ENCODE measurements at regions of chr13 and their contacts with region 1.

Region 1: DNA sequence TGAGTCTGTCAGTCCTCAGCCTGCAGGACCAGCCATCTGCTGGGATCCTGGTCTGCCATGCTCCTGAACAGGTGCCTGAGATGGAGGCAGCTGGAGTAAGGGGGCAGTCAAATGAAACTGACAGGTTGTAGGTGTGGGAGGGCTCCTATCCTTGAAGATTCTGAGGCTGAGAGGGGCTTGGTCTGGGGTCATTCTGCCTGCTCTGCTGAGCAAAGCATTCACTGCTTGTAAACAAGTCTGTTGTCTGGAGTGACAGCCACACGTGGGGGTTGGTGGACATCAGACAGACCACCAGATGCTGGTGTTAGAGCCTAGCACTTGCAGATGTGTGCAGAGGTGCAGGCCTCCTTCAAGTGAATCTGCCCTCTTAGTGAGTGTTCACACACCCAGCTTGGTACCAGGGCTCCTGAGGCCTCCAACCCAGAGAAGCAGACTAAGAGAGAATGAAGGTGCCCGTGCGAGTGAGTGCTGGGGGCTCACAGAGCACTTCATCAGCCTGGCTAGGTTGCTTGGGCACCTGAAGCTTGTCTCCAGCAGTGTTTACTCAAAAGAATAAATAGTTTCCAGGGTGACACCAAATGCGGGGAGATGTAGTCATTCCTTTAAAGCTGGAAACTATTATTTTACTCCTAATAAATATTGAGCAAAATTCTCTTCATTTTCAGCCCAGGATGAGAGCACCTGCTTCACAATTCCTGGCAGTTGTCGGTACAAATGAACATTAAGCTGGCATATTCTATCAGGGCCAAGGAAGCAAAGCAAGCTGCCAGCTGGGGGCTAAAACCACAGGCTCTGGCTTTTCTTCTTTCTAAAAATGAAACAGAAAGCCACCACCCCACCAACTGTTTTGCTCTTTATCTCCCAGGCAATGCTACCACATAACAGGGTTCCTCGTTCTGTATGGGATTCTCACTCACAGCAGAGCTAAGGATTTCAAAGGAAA is 82.3 kb downstream of the RNASEH2B start:
- DNase-seq: no peak
- H3K4me3 ChIP-seq: no peak overlapping the region
- H3K27ac ChIP-seq: no peak overlapping the region
- H3K4me1 ChIP-seq: no peaks in the 10 kb centered on the region
- H3K27me3 ChIP-seq: no peaks in the 10 kb centered on the region
- CTCF ChIP-seq: no peak
- POLR2A ChIP-seq: no peak

Region 2: GRCh38 chr13:51058461-51059167 is 66.8 kb after region 1 on chr13:
- intact Hi-C with region 1: loop called (anchors 5 kb)
- DNase-seq: no peak
- H3K4me3 ChIP-seq: no peak overlapping the region
- H3K27ac ChIP-seq: no peak overlapping the region
- H3K4me1 ChIP-seq: no peaks in the 10 kb centered on the region
- H3K27me3 ChIP-seq: no peaks in the 10 kb centered on the region
- CTCF ChIP-seq: no peak
- POLR2A ChIP-seq: no peak

Region 3: DNA sequence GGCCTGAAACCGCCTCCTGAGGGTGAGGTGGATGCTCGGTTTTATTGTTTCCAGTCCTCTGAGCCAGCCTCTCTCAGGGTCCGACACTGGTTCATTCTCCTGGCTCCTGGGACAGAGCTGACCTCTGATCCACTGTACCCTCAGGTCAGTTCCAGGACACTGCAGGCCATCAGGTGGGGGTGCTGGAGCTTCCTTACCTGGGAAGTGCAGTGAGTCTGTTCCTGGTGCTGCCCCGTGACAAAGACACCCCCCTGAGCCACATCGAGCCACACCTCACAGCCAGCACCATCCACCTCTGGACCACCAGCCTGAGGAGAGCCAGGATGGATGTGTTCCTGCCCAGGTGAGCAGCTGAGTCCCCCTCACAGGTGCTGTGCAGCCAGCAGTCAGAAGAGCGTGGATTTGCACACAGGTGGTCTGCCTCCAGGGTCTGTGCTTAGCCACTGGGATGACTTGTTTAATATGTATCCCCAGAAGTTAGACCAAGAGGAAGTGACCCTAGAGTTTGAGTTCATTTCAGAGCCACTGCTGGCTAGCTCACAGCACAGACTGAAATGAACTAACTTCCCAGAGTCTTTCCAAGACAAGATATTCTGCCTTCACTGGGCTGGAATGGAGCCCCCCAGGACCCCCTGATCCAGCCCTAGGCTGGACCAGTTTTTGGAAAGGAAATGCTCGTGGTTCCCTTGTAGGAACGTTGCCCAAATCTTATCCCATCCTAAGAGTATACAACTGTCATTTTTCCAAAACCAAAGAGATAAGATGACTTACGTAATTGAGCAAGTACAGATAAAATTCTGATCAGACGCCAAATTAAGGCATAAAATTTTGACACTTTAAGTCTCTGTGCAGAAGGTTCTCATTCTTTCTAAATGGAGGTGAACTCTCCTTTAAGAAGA is 356.5 kb after region 1 on chr13:
- intact Hi-C with region 1: no loop called
- DNase-seq: no peak
- H3K4me3 ChIP-seq: no peak overlapping the region
- H3K27ac ChIP-seq: no peak overlapping the region
- H3K4me1 ChIP-seq: no peaks in the 10 kb centered on the region
- H3K27me3 ChIP-seq: no peaks in the 10 kb centered on the region
- CTCF ChIP-seq: no peak
- POLR2A ChIP-seq: no peak